ENCODE measurements at regions of chr18 and their contacts with region 1.

Region 1: GRCh38 chr18:49486953-49487710 is at the start of gene C18orf32:
- DNase-seq: peak; percentile 91
- H3K4me3 Mint-ChIP-seq: peak within 1 kb of the TSS; percentile 98
- H3K27ac Mint-ChIP-seq: peak within 1 kb of the TSS; percentile 98
- H3K4me1 Mint-ChIP-seq: peaks cover 44% of the 10 kb centered on the region
- H3K27me3 Mint-ChIP-seq: no peaks in the 10 kb centered on the region
- total RNA-seq, gene C18orf32: 21.7 and 22.6 TPM in 2 replicates

Region 2: GRCh38 chr18:49459404-49460171 is 27.5 kb before region 1 on chr18:
- intact Hi-C with region 1: loop called (anchors 1 kb)
- DNase-seq: no peak
- H3K4me3 Mint-ChIP-seq: peak overlapping the region; percentile 84
- H3K27ac Mint-ChIP-seq: peak overlapping the region; percentile 48
- H3K4me1 Mint-ChIP-seq: peaks cover 19% of the 10 kb centered on the region
- H3K27me3 Mint-ChIP-seq: peaks cover 3% of the 10 kb centered on the region

Region 3: GRCh38 chr18:49834258-49834657 is 347.1 kb after region 1 on chr18:
- intact Hi-C with region 1: no loop called
- DNase-seq: no peak
- H3K4me3 Mint-ChIP-seq: no peak overlapping the region
- H3K27ac Mint-ChIP-seq: no peak overlapping the region
- H3K4me1 Mint-ChIP-seq: peaks cover 2% of the 10 kb centered on the region
- H3K27me3 Mint-ChIP-seq: peaks cover 2% of the 10 kb centered on the region

Region 4: GRCh38 chr18:50374753-50375391 is 887.7 kb after region 1 on chr18 and contains the start of gene SKA1:
- intact Hi-C with region 1: loop called (anchors 2 kb)
- DNase-seq: peak; percentile 87
- H3K4me3 Mint-ChIP-seq: peak within 1 kb of the TSS; percentile 87
- H3K27ac Mint-ChIP-seq: peak within 1 kb of the TSS; percentile 86
- H3K4me1 Mint-ChIP-seq: peaks cover 13% of the 10 kb centered on the region
- H3K27me3 Mint-ChIP-seq: peaks cover 4% of the 10 kb centered on the region
- total RNA-seq, gene SKA1: 23.5 and 23.6 TPM in 2 replicates

Measured in activated T-helper 2 cell treated with anti-CD3 and anti-CD28 coated beads, Interferon-gamma antibody, Interleukin-2, Interleukin-4, amounts not matched to agents 10 μg/mL and 5 μg/mL and 100 μg/mL, durations not matched to agents 14 hours and 24 hours and 36 hours (primary cell).